Dorsolateral prefrontal cortex (tissue), 120 donors: ENCODE measurements at regions of chr20 and their contacts with region 1.

Region 1: DNA sequence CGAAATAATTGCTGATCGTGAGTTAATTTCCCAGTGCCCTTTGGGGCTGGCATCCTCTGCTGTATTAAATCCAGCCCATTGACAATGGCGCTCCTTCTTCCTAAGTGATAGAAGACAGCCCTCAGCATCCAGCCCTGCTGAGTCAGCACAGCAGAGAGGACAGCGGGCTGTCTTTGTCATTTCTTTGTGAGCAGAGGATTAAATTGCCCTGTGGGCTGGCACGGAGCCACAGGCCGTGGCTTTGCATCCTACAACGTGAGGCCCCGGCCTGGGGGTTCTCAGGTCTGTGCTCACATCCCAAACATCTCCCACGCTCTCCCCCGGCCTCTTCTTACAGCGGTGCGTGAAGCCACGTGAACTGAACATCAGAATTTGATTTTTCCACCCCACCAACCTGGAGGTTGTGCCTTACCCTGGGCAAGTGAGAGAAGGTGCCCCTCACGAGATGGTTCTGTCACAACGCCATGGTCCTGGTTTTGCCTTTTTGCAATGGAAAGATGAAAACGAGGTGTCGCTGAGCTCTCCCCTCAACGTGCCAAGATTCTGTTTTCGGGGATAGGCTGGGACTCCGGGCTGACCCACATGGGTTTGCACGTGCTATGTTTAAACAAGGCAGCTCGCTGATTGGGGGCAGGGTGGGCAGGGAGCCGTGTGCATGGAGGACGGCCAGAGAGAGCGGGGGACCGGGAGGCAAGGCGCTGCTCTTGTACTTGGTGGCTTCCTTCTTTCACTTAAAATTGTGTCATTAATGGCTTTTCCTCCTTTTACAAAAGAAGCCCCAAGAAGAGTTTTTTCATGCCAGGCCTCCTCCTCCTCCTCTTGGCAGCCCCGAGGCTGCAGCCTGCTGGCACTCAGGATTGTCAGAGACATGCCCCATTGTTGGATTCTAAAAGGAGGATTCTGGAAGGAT is 19.5 kb downstream of the CDH4 start:
- DNase-seq: peak in 6 of 10 donors; percentile 52 to 64 (median 62)
- H3K4me3 ChIP-seq: peak overlapping the region in 55 of 59 donors; percentile 9 to 63 (median 36)
- H3K27ac ChIP-seq: peak overlapping the region in 47 of 59 donors; percentile 14 to 87 (median 63)
- H3K27me3 ChIP-seq: peaks cover 0 to 2% (median 0%) of the 10 kb centered on the region in 45 donors
- CTCF ChIP-seq: peak in 2 of 56 donors; percentile 12 to 28

Region 2: DNA sequence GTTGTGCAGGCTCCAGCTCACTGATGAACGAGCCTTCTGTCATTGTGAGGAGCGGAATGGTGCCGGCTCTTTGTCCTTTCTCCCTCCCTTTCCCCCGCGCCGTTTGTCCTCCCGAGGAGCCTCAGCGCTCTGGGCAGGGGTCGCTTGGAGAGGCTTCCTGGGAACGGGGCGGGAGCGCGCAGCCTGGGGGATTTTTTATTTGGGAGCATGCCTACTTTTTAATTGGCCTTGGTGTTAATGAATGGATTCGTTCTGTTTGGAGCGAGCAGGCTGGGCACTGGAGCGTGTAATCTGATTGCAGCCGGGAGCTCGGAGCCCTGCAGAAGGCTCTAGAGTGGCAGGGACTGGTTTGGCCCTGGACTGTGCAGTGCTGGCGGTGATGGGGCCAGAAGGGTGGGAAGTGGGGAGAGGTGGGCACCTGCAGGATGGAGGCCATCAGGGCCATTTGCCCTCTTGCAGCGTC is 99.3 kb after region 1 on chr20:
- intact Hi-C with region 1: loop called in 1 of 2 experiments (anchors 5 kb)
- DNase-seq: peak in 5 of 10 donors; percentile 29 to 70 (median 31)
- H3K4me3 ChIP-seq: peak overlapping the region in 28 of 59 donors; percentile 4 to 56 (median 36)
- H3K27ac ChIP-seq: peak overlapping the region in 34 of 59 donors; percentile 4 to 79 (median 52)
- H3K27me3 ChIP-seq: no peaks in the 10 kb centered on the region
- CTCF ChIP-seq: peak in 1 of 56 donors; percentile 26

Region 3: DNA sequence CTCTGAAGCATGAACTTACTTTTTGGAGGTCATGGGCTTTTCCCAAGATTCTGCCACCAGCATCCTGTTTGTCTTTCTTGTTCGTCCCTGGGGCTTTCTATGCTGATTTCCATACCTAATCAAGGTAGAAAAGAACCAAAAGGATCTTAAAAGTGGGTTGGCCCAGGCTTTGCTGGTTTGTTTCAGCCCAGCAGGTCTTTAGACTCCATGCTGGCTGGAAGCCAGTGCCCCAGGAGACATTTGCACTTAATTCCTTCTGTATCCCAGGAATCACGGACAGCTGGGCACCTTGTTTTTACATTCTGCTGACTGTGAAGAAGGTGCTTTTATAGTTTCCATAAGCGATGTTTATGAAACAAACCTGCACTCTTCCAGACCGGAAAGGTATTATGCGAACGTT is 176.4 kb after region 1 on chr20:
- intact Hi-C with region 1: no loop called
- DNase-seq: peak in 1 of 10 donors; percentile 5
- H3K4me3 ChIP-seq: peak overlapping the region in 9 of 59 donors; percentile 1 to 49 (median 21)
- H3K27ac ChIP-seq: peak overlapping the region in 35 of 59 donors; percentile 3 to 91 (median 60)
- H3K27me3 ChIP-seq: no peaks in the 10 kb centered on the region
- CTCF ChIP-seq: no peak